ENCODE measurements at regions of chr16 and their contacts with region 1.

Region 1: DNA sequence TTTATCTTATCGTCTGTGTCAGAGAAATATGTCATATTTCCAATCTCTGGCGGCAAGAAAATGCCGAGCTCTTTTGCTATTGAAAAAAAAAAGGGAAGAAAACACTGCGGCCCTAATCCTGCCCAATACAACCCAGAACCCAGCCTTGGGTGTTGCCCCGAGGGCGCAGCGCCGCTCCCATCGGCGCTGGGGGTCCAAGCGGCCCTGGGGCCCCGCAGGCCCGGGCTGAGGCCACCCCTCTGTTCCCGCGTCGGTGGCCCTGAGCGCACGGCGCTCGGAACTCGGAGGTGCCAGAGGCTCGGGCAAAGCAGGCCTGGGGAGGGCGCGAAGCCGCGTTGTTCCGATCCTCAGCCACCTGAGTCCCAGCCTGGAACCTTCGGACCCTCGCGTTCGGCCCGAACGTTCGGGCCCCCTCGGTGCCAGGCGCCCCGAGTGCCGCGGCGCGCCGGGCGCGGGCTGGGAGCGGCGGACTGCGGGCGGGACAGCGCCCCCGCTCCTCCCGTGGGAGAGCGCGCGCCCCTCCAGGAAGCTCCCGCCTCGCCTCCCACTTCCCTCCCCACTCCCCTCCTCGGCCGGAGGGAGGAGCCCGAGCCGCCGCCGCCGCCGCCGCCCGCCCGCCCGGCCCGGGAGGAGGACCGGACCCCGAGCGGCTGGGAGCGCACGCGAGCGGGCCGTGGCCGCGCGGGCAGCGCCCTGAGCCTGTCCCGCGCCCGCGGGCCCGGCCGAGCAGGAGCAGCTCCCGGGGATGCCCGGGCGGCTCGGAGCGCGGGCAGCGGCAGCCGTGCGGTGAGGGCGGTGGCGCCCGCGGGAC is at the start of gene CPNE2:
- DNase-seq: no peak
- H3K4me3 ChIP-seq: peak within 1 kb of the TSS; percentile 70
- CTCF ChIP-seq: peak; percentile 27

Region 2: GRCh38 chr16:56950881-56951771 is 141.1 kb before region 1 on chr16:
- CTCF ChIA-PET with region 1: no interaction called
- POLR2A ChIA-PET with region 1: no interaction called
- DNase-seq: no peak
- H3K4me3 ChIP-seq: no peak overlapping the region
- CTCF ChIP-seq: peak; percentile 87

Region 3: GRCh38 chr16:57077714-57078113 is 14.5 kb before region 1 on chr16:
- CTCF ChIA-PET with region 1: interaction called, 183 read pairs
- POLR2A ChIA-PET with region 1: interaction called, 3 read pairs
- DNase-seq: no peak
- H3K4me3 ChIP-seq: no peak overlapping the region
- CTCF ChIP-seq: no peak

Region 4: GRCh38 chr16:57115514-57116182 is 23.5 kb after region 1 on chr16:
- CTCF ChIA-PET with region 1: interaction called, 20 read pairs
- POLR2A ChIA-PET with region 1: interaction called, 3 read pairs
- DNase-seq: no peak
- H3K4me3 ChIP-seq: no peak overlapping the region
- CTCF ChIP-seq: no peak

Region 5: GRCh38 chr16:57147381-57148221 is 55.4 kb after region 1 on chr16:
- CTCF ChIA-PET with region 1: interaction called, 16 read pairs
- POLR2A ChIA-PET with region 1: no interaction called
- DNase-seq: no peak
- H3K4me3 ChIP-seq: no peak overlapping the region
- CTCF ChIP-seq: no peak

Region 6: GRCh38 chr16:57179215-57179828 is 87.1 kb after region 1 on chr16:
- CTCF ChIA-PET with region 1: interaction called, 197 read pairs
- POLR2A ChIA-PET with region 1: no interaction called
- DNase-seq: no peak
- H3K4me3 ChIP-seq: no peak overlapping the region
- CTCF ChIP-seq: no peak